GM13977 (cell line): ENCODE measurements at regions of chr5 and their contacts with region 1.

Region 1: GRCh38 chr5:160199410-160199911 is 29.8 kb upstream of the FABP6 start:
- DNase-seq: peak; percentile 90
- CTCF ChIP-seq: peak; percentile 91

Region 2: GRCh38 chr5:160342403-160342941 is 143.0 kb after region 1 on chr5:
- in situ Hi-C with region 1: loop called (anchors 10 kb)
- DNase-seq: no peak
- CTCF ChIP-seq: no peak